H1 (cell line): ENCODE measurements at regions of chr6 and their contacts with region 1.

Region 1: DNA sequence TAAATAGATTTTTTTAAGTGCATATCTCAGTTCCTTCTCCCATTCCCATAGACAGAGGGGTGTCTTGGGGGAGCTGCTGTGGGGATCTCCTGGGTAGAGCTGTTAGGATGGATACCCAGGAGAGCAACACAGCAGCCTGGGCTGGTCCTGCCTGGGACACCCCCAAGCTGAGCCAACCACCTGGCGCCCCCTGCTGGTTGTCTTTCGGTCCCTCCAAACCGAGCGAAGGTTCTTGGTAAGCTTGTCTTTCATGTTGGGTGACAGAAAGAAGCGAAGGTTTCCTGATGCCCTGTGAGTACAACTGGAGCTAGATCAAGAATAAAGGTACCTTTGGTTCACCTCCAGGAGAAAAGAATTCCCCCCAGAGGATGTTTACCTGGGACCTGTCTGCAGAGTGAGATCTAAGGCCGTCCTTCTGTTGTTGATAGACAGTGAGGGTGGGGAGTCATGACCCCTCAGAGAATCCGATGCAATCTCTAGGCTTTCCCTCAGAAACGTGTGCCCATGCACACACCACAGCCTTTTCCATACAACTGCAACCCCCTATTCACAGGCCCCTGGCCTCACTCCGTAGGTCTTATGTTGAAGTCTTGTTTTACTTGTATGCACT is 50.8 kb downstream of the SNX9 start:
- DNase-seq: peak; percentile 70 to 97
- H3K4me3 ChIP-seq: no peak overlapping the region
- H3K27ac ChIP-seq: no peak overlapping the region
- H3K4me1 ChIP-seq: peaks cover 0 to 7% (median 2%) of the 10 kb centered on the region in 4 experiments; a peak in 4 of 7 replicates
- H3K27me3 ChIP-seq: no peaks in the 10 kb centered on the region
- CTCF ChIP-seq: peak; percentile 83 to 93 (median 85)
- EP300 ChIP-seq: no peak
- POLR2A ChIP-seq: no peak
- RAD21 ChIP-seq: peak; percentile 85 to 93

Region 2: DNA sequence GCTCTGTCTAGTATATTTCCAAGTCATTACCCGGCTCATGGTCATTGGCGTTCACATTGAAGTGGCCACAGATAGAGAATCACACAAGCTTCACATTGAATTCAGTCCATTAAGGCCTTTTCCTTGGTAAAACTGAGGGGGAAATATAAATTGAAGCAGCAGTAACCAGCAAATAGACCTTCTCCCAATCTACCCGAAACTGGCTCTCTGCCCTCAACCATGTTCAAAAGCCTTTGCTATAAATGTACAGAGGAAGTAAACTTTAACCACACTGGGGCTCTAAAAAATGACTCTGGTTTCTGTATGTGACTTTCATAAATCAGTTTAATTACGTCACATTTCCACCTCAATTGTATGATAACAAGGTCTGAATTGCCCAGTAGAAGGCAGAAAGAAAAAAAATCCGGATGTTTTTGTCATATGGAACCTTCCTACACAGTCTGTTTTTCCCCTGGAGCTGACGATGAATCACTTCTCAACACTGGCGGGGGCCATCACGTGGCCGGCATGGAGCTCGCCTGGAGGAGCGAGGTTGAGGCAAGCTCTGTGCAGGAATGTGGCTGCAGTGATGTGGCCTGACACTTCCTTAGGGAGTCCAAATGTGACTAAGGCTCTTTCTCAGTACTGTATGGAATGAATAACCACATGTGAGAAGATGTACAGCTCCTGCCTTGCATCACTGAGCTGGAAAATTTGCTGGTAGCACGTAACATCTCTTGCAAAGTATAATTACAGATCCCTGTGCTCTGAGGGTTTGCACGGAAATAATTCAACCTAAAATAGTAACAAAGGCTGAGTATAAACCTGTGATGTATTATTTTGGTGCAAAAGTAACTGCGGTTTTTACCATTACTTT is 109.4 kb before region 1 on chr6:
- CTCF ChIA-PET with region 1: interaction called, 18 read pairs
- POLR2A ChIA-PET with region 1: interaction called, 3 read pairs
- DNase-seq: no peak
- H3K4me3 ChIP-seq: no peak overlapping the region
- H3K27ac ChIP-seq: no peak overlapping the region
- H3K4me1 ChIP-seq: peaks cover 11 to 17% (median 13%) of the 10 kb centered on the region in 4 experiments; a peak in 6 of 7 replicates
- H3K27me3 ChIP-seq: no peaks in the 10 kb centered on the region
- CTCF ChIP-seq: no peak
- EP300 ChIP-seq: no peak
- POLR2A ChIP-seq: no peak
- RAD21 ChIP-seq: no peak

Region 3: DNA sequence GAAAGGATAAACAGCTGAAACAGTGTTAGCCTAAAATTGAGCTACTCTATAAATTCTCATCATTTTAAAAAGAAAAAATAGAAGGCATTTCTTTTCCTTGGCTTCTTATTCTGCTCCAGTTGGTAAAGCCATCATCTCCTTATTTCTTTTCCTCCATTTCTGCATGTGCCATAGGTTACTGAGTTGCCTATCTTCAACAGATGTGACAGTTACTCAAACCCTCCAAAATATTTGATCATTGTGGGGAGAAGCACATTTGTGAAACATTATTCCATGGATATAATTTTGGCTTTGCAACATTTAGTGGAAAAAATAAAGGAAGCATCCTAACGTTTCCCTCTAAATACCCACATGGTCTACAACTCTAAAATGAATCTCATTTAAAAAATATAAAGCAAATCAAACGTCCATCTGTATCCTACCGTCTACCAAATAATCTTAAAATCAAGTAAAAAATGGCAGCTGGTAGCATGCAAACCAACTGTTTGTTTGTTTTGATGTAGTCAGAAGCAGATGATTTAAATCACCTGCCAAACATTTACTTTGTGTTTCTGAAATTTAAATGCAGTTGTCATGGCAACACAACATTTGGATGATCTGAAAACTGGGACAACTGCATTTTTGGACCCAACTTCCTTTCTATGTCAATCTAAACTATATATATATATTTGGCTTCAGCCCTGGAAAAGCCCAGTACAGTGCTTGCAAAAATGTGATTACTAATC is 67.5 kb before region 1 on chr6:
- CTCF ChIA-PET with region 1: interaction called, 10 read pairs
- POLR2A ChIA-PET with region 1: no interaction called
- DNase-seq: no peak
- H3K4me3 ChIP-seq: no peak overlapping the region
- H3K27ac ChIP-seq: no peak overlapping the region
- H3K4me1 ChIP-seq: no peaks in the 10 kb centered on the region
- H3K27me3 ChIP-seq: no peaks in the 10 kb centered on the region
- CTCF ChIP-seq: no peak
- EP300 ChIP-seq: no peak
- POLR2A ChIP-seq: no peak
- RAD21 ChIP-seq: no peak

Region 4: GRCh38 chr6:157834549-157834948 is 39.3 kb before region 1 on chr6:
- CTCF ChIA-PET with region 1: interaction called, 12 read pairs
- POLR2A ChIA-PET with region 1: no interaction called
- DNase-seq: no peak
- H3K4me3 ChIP-seq: no peak overlapping the region
- H3K27ac ChIP-seq: no peak overlapping the region
- H3K4me1 ChIP-seq: peaks cover 8 to 28% (median 21%) of the 10 kb centered on the region in 4 experiments
- H3K27me3 ChIP-seq: no peaks in the 10 kb centered on the region
- CTCF ChIP-seq: no peak
- EP300 ChIP-seq: no peak
- POLR2A ChIP-seq: no peak
- RAD21 ChIP-seq: no peak